Dorsolateral prefrontal cortex (tissue), 120 donors: ENCODE measurements at regions of chr12 and their contacts with region 1.

Region 1: GRCh38 chr12:121296618-121297434 is at the start of gene CAMKK2:
- DNase-seq: peak; percentile 57 to 91 (median 76)
- H3K4me3 ChIP-seq: peak within 1 kb of the TSS; percentile 71 to 100 (median 96)
- H3K27ac ChIP-seq: peak within 1 kb of the TSS in 58 of 59 donors; percentile 49 to 96 (median 89)
- H3K27me3 ChIP-seq: no peaks in the 10 kb centered on the region
- CTCF ChIP-seq: peak in 38 of 56 donors; percentile 9 to 46 (median 22)
- total RNA-seq, gene CAMKK2: 52.8 to 279 (median 164) TPM

Region 2: DNA sequence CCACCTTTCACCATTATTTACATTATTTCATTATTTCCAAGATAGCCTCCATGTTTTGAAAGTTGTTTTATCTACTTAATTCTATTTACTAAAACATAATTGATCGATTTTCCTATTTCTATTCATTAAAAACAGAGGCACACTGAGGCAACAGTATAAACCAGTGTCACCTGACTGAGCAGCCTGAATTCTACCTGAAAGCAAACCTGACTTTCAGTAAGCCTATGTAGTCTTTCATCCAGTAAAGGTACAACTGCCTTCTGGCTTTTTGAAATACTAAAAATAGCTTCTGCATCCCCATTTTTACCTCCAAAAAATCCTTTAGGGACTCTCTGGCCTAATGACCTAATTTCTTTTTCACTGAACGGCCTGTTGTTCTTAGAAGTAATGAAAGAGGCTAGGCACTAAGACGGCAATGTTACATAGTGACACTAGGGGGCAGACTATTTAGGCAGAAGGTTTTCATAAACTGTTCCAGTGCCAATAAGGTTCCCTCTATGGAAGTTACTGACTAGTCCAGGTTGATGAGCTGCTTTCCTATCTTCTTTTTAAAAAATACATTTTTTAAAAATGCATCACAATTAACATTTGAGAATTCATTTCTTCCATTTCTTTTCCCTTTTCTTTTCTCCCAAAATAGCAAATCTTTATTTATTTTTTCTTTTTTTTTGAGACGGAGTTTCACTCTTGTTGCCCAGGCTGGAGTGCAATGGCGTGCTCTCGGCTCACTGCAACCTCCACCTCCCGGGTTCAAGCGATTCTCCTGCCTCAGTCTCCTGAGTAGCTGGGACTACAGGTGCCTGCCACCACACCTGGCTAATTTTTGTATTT is 37.9 kb after region 1 on chr12:
- intact Hi-C with region 1: loop called in 1 of 2 experiments (anchors 5 kb)
- DNase-seq: peak in 1 of 10 donors; percentile 17
- H3K4me3 ChIP-seq: peak overlapping the region in 1 of 59 donors; percentile 9
- H3K27ac ChIP-seq: peak overlapping the region in 33 of 59 donors; percentile 4 to 77 (median 47)
- H3K27me3 ChIP-seq: no peaks in the 10 kb centered on the region
- CTCF ChIP-seq: peak; percentile 73 to 97 (median 88)

Region 3: DNA sequence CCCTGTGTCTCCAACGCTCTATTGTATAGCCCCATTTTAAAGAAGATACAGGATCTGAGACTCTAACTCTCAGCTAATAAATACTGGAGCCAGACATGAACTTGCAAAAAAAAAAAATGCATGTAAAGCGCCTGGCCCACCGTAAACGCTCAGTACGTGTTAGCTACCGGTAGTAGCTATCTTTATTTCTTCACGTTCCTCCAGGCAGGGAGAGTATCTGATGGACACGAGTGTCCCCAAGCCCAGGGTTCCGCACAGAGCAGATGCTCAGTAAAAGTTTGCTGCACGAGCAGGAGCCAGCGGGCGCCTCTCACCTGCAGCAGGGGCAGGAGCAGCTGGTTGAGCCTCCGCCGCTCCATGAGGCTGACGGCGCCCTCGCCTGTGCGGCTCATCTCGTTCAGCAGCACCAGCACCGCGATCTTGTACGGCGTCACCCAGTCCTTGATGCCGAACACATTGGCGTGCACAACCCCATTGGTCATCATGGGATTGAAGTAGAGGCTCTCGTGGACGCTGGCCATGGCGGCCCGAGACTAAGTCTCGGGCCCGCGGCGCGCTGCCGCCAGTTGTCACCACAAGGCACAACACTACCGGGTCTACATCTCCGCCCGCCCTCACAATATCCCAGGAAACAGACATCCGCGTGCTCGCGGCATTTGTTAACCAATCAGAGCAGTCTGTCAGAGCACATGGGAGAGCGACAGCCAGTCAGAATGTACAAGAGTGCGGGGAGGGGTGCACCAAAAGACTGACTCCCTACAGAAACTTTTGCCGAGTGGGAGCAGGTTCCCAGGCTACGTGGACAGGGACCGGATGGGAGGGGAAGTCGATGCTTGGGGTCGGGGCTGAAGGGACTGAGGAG is 55.2 kb after region 1 on chr12 and contains the start of gene ANAPC5:
- intact Hi-C with region 1: loop called in 1 of 2 experiments (anchors 5 kb)
- DNase-seq: peak; percentile 86 to 99 (median 96)
- H3K4me3 ChIP-seq: peak within 1 kb of the TSS; percentile 53 to 99 (median 94)
- H3K27ac ChIP-seq: peak within 1 kb of the TSS in 58 of 59 donors; percentile 3 to 94 (median 84)
- H3K27me3 ChIP-seq: no peaks in the 10 kb centered on the region
- CTCF ChIP-seq: peak in 43 of 56 donors; percentile 19 to 63 (median 33)
- total RNA-seq, gene ANAPC5: 108 to 272 (median 159) TPM

Region 4: GRCh38 chr12:121499929-121500793 is 203.3 kb after region 1 on chr12:
- intact Hi-C with region 1: no loop called
- DNase-seq: peak; percentile 75 to 88 (median 82)
- H3K4me3 ChIP-seq: peak overlapping the region in 51 of 59 donors; percentile 6 to 58 (median 38)
- H3K27ac ChIP-seq: peak overlapping the region in 52 of 59 donors; percentile 8 to 90 (median 71)
- H3K27me3 ChIP-seq: no peaks in the 10 kb centered on the region
- CTCF ChIP-seq: peak; percentile 91 to 100 (median 97)